Breast epithelium (tissue), 4 donors: ENCODE measurements at regions of chr4 and their contacts with region 1.

Region 1: GRCh38 chr4:7843831-7844593 is 95.6 kb downstream of the AFAP1 start:
- DNase-seq: peak in 1 of 2 donors; percentile 63
- H3K4me3 ChIP-seq: no peak overlapping the region
- H3K27ac ChIP-seq: peak overlapping the region; percentile 14 to 64
- H3K4me1 ChIP-seq: no peaks in the 10 kb centered on the region
- H3K27me3 ChIP-seq: no peaks in the 10 kb centered on the region
- CTCF ChIP-seq: peak; percentile 30 to 59 (median 46)
- POLR2A ChIP-seq: no peak

Region 2: DNA sequence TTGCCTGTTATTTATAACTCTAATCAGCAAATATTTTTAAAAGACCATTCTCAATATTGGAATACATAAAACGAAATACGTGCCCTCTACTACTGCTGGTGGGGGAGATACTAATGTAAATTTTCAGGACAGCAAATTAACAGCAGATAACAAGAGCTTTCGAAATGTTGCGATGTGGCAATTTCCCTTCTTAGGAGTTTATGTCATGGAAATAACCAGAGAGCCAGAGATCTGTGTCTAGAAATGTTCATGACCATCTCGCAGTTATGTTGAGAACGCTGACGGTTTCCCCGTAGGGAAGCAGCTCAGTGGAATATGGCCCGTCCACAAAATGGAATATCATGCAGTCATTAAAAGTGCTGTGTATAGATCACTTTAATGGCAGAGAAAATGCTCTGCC is 170.9 kb before region 1 on chr4:
- intact Hi-C with region 1: no loop called
- DNase-seq: no peak
- H3K4me3 ChIP-seq: no peak overlapping the region
- H3K27ac ChIP-seq: no peak overlapping the region
- H3K4me1 ChIP-seq: no peaks in the 10 kb centered on the region
- H3K27me3 ChIP-seq: no peaks in the 10 kb centered on the region
- CTCF ChIP-seq: no peak
- POLR2A ChIP-seq: no peak

Region 3: GRCh38 chr4:7860600-7861163 is 16.7 kb after region 1 on chr4:
- intact Hi-C with region 1: loop called (anchors 1 kb)
- DNase-seq: no peak
- H3K4me3 ChIP-seq: no peak overlapping the region
- H3K27ac ChIP-seq: no peak overlapping the region
- H3K4me1 ChIP-seq: no peaks in the 10 kb centered on the region
- H3K27me3 ChIP-seq: no peaks in the 10 kb centered on the region
- CTCF ChIP-seq: no peak
- POLR2A ChIP-seq: no peak

Region 4: GRCh38 chr4:7890635-7891393 is 46.8 kb after region 1 on chr4:
- intact Hi-C with region 1: no loop called
- DNase-seq: no peak
- H3K4me3 ChIP-seq: no peak overlapping the region
- H3K27ac ChIP-seq: peak overlapping the region; percentile 54 to 59
- H3K4me1 ChIP-seq: peaks cover 0 to 5% of the 10 kb centered on the region in 2 donors
- H3K27me3 ChIP-seq: no peaks in the 10 kb centered on the region
- CTCF ChIP-seq: no peak
- POLR2A ChIP-seq: no peak

Region 5: GRCh38 chr4:7984286-7984925 is 140.4 kb after region 1 on chr4:
- intact Hi-C with region 1: loop called (anchors 1 kb)
- DNase-seq: no peak
- H3K4me3 ChIP-seq: no peak overlapping the region
- H3K27ac ChIP-seq: no peak overlapping the region
- H3K4me1 ChIP-seq: no peaks in the 10 kb centered on the region
- H3K27me3 ChIP-seq: no peaks in the 10 kb centered on the region
- CTCF ChIP-seq: no peak
- POLR2A ChIP-seq: no peak